GM12878 (cell line): ENCODE measurements at regions of chr5 and their contacts with region 1.

Region 1: GRCh38 chr5:6737023-6737941 is 24.1 kb downstream of the TENT4A start:
- DNase-seq: peak; percentile 88
- ATAC-seq: peak; percentile 78
- H3K4me3 ChIP-seq: peak overlapping the region; percentile 17; the same call in 1 of the 2 replicates
- H3K27ac ChIP-seq: peak overlapping the region; percentile 99
- H3K4me1 ChIP-seq: peaks cover 51% of the 10 kb centered on the region
- H3K27me3 ChIP-seq: no peaks in the 10 kb centered on the region
- CTCF ChIP-seq: no peak
- EP300 ChIP-seq: peak; percentile 98
- POLR2A ChIP-seq: peak; percentile 62
- RAD21 ChIP-seq: peak; percentile 6; the same call in 1 of the 2 replicates

Region 2: GRCh38 chr5:6480133-6481051 is 256.9 kb before region 1 on chr5:
- CTCF ChIA-PET with region 1: no interaction called
- POLR2A ChIA-PET with region 1: no interaction called
- RAD21 ChIA-PET with region 1: no interaction called
- SMC1A ChIA-PET with region 1: interaction called, 3 read pairs
- in situ Hi-C with region 1: no loop called
- intact Hi-C with region 1: loop called (anchors 2 kb)
- DNase-seq: peak; percentile 67
- ATAC-seq: peak; percentile 72
- H3K4me3 ChIP-seq: no peak overlapping the region
- H3K27ac ChIP-seq: peak overlapping the region; percentile 22; the same call in 1 of the 2 replicates
- H3K4me1 ChIP-seq: peaks cover 54% of the 10 kb centered on the region
- H3K27me3 ChIP-seq: no peaks in the 10 kb centered on the region
- CTCF ChIP-seq: peak; percentile 12 to 38 (median 17); a peak in 3 of 6 replicates
- EP300 ChIP-seq: peak; percentile 28 to 58; a peak in 1 of 4 replicates
- POLR2A ChIP-seq: no peak
- RAD21 ChIP-seq: peak; percentile 44

Region 3: DNA sequence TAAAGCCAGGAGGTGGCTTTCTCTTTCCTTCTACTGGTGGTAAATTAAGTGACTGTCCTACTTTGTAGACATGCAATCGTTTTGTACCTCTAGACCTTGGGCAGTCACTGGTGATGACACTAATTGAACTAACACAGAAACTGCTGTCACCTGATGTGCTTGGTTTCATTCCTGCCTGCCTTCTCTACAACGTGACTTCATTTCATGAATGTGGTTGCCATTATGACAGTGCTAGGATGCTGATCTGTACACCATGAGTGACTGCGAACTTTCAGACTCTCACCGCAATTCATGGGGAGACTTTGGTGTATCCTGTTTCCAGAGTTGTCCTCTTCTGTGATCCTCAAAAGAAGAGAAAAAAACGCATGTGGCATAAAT is 241.1 kb before region 1 on chr5:
- CTCF ChIA-PET with region 1: no interaction called
- POLR2A ChIA-PET with region 1: no interaction called
- RAD21 ChIA-PET with region 1: no interaction called
- SMC1A ChIA-PET with region 1: interaction called, 3 read pairs
- in situ Hi-C with region 1: loop called (anchors 5 kb)
- intact Hi-C with region 1: loop called (anchors 1 kb)
- DNase-seq: peak; percentile 97
- ATAC-seq: peak; percentile 86
- H3K4me3 ChIP-seq: no peak overlapping the region
- H3K27ac ChIP-seq: peak overlapping the region; percentile 21; the same call in 1 of the 2 replicates
- H3K4me1 ChIP-seq: peaks cover 38% of the 10 kb centered on the region
- H3K27me3 ChIP-seq: no peaks in the 10 kb centered on the region
- CTCF ChIP-seq: no peak
- EP300 ChIP-seq: peak; percentile 97 to 99
- POLR2A ChIP-seq: no peak
- RAD21 ChIP-seq: no peak

Region 4: DNA sequence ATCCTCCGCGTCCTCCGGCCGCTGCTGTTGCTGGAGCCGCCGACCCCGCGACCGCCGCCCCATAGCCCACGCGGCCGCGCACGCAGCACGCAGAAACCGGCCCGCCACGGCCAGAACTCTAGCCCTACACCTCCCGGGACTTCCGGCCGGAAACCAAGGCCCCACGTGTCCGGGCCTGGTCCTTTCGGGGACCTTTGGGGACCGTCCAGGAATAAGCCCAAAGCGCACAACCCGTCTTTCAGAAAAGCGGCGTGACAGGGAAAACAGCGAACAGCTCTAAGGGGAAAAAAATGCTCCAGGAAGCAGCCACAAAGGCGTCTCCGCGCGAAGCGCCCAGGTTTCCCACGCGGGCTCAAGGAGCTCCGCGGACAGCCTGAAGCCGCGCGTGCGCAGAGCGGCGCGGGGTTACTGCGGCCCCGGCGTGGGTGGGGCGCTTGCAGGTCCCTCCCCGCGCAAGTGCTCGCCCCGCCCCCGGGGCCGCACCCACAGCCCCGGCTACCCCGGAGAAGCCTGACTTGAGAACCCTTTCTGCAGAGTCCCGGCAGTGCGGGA is 104.3 kb before region 1 on chr5 and contains the starts of genes NSUN2 and SRD5A1:
- CTCF ChIA-PET with region 1: interaction called, 7 read pairs
- POLR2A ChIA-PET with region 1: interaction called, 5 read pairs
- RAD21 ChIA-PET with region 1: interaction called, 19 read pairs
- SMC1A ChIA-PET with region 1: interaction called, 17 read pairs
- in situ Hi-C with region 1: loop called (anchors 5 kb)
- intact Hi-C with region 1: loop called (anchors 2 kb)
- DNase-seq: peak; percentile 71
- ATAC-seq: peak; percentile 90
- H3K4me3 ChIP-seq: peak within 1 kb of the TSS; percentile 98
- H3K27ac ChIP-seq: peak within 1 kb of the TSS; percentile 97
- H3K4me1 ChIP-seq: peaks cover 4% of the 10 kb centered on the region; the same call in 1 of the 2 replicates
- H3K27me3 ChIP-seq: no peaks in the 10 kb centered on the region
- CTCF ChIP-seq: no peak
- EP300 ChIP-seq: no peak
- POLR2A ChIP-seq: peak; percentile 93
- RAD21 ChIP-seq: 0 out of 2 replicates have a peak, but pooled peaks have one; percentile 2
- polyA plus RNA-seq, gene NSUN2: 8.0 to 10.8 TPM
- polyA plus RNA-seq, gene SRD5A1: 0.76 to 2.0 TPM

Region 5: DNA sequence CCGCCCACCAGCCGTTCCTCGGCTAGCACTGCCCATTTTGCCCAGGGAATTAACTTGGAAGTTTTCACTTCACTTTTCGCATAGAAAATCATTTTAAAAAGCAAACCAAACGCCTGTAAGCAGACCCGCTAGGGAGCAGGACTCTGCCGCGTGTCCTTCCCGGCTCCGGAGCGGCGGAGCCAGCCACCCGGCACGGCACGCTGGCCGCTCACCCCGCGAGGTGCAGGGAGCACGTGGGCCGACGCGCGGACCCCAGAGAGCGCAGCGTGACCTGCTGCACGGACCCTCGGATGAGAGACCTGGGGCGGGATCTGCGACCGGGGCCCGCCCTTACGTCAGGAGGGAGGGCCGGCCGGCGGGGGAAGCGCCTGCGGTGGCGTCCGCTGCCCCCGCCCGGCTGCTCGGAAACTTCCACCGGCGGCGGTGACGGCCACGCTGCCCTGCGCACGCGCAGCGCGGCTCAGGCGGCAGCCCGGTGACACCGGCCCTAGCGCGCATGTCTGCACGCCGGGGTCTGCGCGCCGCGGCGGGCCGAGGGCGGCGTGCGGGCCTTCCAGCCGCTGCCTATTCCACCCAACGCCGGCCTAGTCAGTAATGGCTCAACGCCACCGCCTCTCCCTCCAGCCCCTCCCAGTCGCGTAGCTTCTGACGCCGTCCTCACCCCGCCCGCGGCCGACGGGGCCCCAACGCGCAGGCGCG is 24.6 kb before region 1 on chr5:
- CTCF ChIA-PET with region 1: interaction called, 3 read pairs
- POLR2A ChIA-PET with region 1: interaction called, 12 read pairs
- RAD21 ChIA-PET with region 1: interaction called, 32 read pairs
- SMC1A ChIA-PET with region 1: interaction called, 7 read pairs
- in situ Hi-C with region 1: no loop called
- intact Hi-C with region 1: loop called (anchors 1 kb)
- DNase-seq: peak; percentile 72
- ATAC-seq: peak; percentile 72
- H3K4me3 ChIP-seq: peak overlapping the region; percentile 85
- H3K27ac ChIP-seq: peak overlapping the region; percentile 93
- H3K4me1 ChIP-seq: peaks cover 26% of the 10 kb centered on the region
- H3K27me3 ChIP-seq: no peaks in the 10 kb centered on the region
- CTCF ChIP-seq: peak in 1 of 3 experiments; percentile 30; a peak in 2 of 6 replicates
- EP300 ChIP-seq: 0 out of 4 replicates have a peak, but pooled peaks of 1 of the 2 experiments have one; percentile 5
- POLR2A ChIP-seq: peak; percentile 75
- RAD21 ChIP-seq: no peak

Region 6: DNA sequence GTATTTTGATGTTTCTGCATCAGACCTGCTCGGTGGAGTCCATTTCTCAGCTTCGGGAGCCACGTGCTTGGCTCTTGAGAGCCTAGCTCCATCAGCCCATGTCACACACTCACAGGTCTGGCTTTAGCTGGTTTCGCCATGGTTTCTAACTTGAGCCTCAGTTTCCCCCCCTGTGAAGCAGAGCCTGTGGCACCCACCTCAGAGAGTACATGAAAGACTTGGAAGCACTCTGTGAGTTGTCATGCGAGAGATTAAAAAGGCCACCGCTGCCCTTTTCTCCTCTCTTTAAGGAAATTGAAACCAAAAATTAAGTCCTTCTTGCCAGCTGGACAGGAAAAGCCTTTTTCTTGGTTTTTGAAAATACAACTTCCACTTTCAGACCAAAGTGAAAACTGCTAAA is 15.3 kb before region 1 on chr5:
- CTCF ChIA-PET with region 1: interaction called, 11 read pairs
- POLR2A ChIA-PET with region 1: interaction called, 26 read pairs
- RAD21 ChIA-PET with region 1: interaction called, 32 read pairs
- SMC1A ChIA-PET with region 1: interaction called, 37 read pairs
- in situ Hi-C with region 1: no loop called
- intact Hi-C with region 1: no loop called
- DNase-seq: no peak
- ATAC-seq: peak; percentile 38
- H3K4me3 ChIP-seq: peak overlapping the region; percentile 72
- H3K27ac ChIP-seq: peak overlapping the region; percentile 79
- H3K4me1 ChIP-seq: peaks cover 36% of the 10 kb centered on the region
- H3K27me3 ChIP-seq: no peaks in the 10 kb centered on the region
- CTCF ChIP-seq: no peak
- EP300 ChIP-seq: no peak
- POLR2A ChIP-seq: no peak
- RAD21 ChIP-seq: no peak

Region 7: DNA sequence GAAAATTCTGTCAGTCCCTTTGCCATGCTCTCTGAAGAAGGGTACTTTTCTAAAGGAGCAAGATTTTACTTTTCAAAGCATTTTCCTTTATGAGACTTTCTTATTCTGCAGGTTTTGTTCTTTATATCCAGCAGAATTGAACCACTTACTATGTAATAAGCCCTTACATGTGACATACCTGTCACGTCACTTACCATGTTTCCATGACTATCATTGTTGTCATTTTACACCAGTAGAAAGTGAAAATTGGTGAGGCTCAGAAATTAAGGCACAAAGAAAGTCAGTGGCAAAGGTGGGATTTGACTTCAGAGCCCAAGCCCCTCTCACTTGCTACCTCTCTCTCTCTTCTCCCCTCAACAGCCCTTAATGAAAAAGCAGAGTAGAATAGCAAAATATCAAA is 235.7 kb after region 1 on chr5:
- CTCF ChIA-PET with region 1: no interaction called
- POLR2A ChIA-PET with region 1: no interaction called
- RAD21 ChIA-PET with region 1: no interaction called
- SMC1A ChIA-PET with region 1: no interaction called
- in situ Hi-C with region 1: no loop called
- intact Hi-C with region 1: no loop called
- DNase-seq: no peak
- ATAC-seq: no peak
- H3K4me3 ChIP-seq: no peak overlapping the region
- H3K27ac ChIP-seq: no peak overlapping the region
- H3K4me1 ChIP-seq: no peaks in the 10 kb centered on the region
- H3K27me3 ChIP-seq: no peaks in the 10 kb centered on the region
- CTCF ChIP-seq: no peak
- EP300 ChIP-seq: no peak
- POLR2A ChIP-seq: no peak
- RAD21 ChIP-seq: no peak